ENCODE measurements at regions of chr1 and their contacts with region 1.

Region 1: DNA sequence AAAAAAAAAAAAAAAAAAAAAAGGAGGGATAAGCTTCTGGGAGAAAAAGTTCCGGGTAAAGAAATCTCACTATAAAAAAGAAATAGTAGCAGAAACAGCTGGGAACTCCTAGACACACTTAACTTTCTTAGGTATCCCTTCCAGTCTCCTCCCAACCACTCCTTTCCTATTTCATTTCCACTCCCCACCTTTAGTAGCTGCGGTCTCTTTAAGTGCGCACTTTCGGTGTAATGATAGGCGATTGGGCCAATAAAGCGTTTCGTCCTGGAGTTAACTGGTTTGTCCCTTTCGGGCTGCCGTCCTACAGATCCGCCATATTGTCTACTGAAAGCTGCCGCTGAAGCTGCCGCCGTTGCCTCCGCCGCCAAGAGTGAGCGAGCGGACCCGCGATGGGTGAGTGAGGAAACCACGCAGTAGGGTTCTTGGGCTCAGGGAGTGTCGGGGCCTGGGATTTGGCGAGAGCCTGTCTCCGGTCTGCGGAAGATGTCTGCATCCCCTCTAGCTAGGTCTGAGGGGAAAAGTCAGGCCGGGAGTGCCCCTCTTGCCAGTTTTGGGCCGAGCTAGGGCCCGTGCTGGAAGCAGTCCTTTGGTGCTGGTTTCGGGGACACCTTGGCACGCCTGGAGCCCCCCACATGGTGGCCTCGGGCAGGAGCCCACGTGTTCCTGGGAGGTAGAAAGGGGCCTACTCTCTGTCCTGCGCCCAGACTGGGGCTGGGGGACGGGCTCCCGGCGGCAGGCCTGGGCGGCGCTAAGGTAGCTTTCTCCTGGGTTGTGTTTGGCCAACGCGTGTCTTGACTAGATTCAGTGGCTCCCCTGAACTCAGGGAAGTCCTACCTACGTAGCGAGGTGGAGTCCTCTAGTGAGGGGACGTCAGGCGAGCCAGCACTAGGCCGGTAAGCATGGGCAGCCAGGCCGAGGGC is at the start of gene KPNA6:
- DNase-seq: peak; percentile 95
- H3K4me3 Mint-ChIP-seq: peak within 1 kb of the TSS; percentile 96
- H3K27ac Mint-ChIP-seq: peak within 1 kb of the TSS; percentile 96
- H3K4me1 Mint-ChIP-seq: peaks cover 44% of the 10 kb centered on the region
- H3K27me3 Mint-ChIP-seq: no peaks in the 10 kb centered on the region

Region 2: GRCh38 chr1:32073299-32074229 is 34.4 kb before region 1 on chr1:
- CTCF ChIA-PET with region 1: interaction called, 10 read pairs
- DNase-seq: peak; percentile 92
- H3K4me3 Mint-ChIP-seq: peak overlapping the region; percentile 78
- H3K27ac Mint-ChIP-seq: peak overlapping the region; percentile 90
- H3K4me1 Mint-ChIP-seq: peaks cover 51% of the 10 kb centered on the region
- H3K27me3 Mint-ChIP-seq: peaks cover 17% of the 10 kb centered on the region

Measured in activated naive CD4-positive, alpha-beta T cell treated with anti-CD3 and anti-CD28 coated beads, Interleukin-2, amount 10 ng/mL, durations not matched to agents 7 days and 5 days (primary cell).